ENCODE measurements at regions of chr3 and their contacts with region 1.

Region 1: GRCh38 chr3:62332835-62333244 is 40.5 kb downstream of the FEZF2 start:
- DNase-seq: no peak
- H3K4me3 ChIP-seq: no peak overlapping the region
- CTCF ChIP-seq: no peak

Region 2: GRCh38 chr3:62299857-62300406 is 32.9 kb before region 1 on chr3:
- CTCF ChIA-PET with region 1: no interaction called
- POLR2A ChIA-PET with region 1: no interaction called
- DNase-seq: no peak
- H3K4me3 ChIP-seq: no peak overlapping the region
- CTCF ChIP-seq: no peak

Region 3: DNA sequence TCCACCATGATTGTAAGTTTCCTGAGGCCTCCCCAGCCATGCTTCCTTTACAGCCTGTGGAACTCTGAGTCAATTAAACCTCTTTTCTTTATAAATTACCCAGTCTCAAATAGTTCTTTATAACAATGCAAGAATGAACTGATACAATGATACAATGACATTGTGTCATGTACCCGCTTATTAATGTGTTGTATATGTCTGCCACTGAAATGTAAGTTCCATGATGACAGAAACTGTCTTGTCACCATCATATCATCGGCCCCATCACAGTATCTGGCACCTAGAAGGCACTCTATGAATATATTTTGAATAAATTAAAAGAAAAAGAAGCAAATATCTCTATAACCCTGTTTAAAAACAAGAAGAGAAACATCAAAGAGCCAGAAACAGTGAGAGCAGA is 10.9 kb after region 1 on chr3:
- CTCF ChIA-PET with region 1: interaction called, 10 read pairs
- POLR2A ChIA-PET with region 1: no interaction called
- DNase-seq: no peak
- H3K4me3 ChIP-seq: no peak overlapping the region
- CTCF ChIP-seq: no peak

Region 4: DNA sequence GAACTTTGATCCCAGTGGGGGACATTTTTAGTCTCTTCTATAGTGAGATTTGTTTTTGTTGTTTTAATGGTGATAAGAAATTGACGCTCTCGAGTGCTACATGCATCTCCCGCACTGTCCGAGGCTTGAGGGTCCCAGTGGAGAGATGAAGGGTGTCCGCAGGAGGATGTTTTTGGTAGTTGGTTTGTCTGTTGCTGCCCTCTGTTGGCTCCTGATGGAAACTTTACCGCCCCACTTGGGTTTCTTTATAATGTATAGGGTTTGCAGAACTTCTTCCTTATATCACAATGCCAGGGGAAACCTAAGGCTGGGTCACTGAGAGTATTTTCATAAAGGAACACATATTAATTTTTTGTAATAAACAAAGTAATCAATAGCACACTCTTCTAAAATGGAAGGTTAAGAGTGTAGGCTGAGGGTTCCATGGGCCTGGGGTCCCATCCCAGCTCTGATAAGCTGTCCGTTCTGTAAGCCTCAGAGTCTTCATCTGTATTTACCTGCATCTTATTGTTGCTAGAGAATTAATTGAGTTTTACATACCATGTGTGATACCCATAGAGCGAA is 225.8 kb after region 1 on chr3:
- CTCF ChIA-PET with region 1: interaction called, 112 read pairs
- POLR2A ChIA-PET with region 1: no interaction called
- DNase-seq: no peak
- H3K4me3 ChIP-seq: no peak overlapping the region
- CTCF ChIP-seq: peak; percentile 39